ENCODE measurements at regions of chr1 and their contacts with region 1.

Region 1: DNA sequence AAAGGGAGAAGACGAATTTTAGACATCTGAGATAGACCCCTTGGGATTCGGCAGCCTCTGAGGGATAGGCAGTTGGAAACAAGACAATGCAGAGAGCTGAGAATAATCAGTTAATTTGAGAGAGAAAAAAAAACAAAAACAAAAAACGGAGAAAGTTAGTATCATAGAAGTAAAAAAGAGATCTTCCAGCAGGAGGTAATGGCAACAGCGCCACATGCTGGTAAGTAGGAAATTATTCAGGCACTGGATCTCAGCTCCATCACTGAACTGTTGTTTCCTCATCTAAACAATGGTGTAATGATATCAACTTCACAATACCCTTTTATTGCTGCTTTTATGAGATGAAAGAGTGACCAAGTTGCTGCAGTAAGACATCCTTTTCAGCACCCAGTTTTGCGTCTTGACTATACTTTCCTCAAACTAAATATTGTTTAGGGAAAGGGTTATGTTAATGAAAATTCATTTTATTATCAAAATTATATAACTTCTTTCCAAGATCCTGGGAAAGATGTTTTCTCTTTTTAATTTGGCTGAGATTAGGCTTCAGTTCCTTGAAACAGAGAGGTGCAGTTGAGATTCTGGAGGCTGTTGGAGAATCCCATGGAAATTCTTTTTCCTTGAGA is 91.4 kb upstream of the KCNA3 start:
- DNase-seq: no peak
- ATAC-seq: peak; percentile 86
- H3K4me3 ChIP-seq: 0 out of 2 replicates have a peak overlapping the region, but pooled peaks have one; percentile 43
- H3K27ac ChIP-seq: no peak overlapping the region
- H3K4me1 ChIP-seq: peaks cover 11% of the 10 kb centered on the region
- H3K27me3 ChIP-seq: no peaks in the 10 kb centered on the region
- CTCF ChIP-seq: peak; percentile 74 to 94 (median 85)
- EP300 ChIP-seq: no peak
- POLR2A ChIP-seq: no peak
- RAD21 ChIP-seq: peak; percentile 97

Region 2: GRCh38 chr1:110594456-110595352 is 171.4 kb before region 1 on chr1:
- CTCF ChIA-PET with region 1: interaction called, 7 read pairs
- POLR2A ChIA-PET with region 1: no interaction called
- RAD21 ChIA-PET with region 1: interaction called, 4 read pairs
- SMC1A ChIA-PET with region 1: interaction called, 10 read pairs
- in situ Hi-C with region 1: no loop called
- intact Hi-C with region 1: no loop called
- DNase-seq: no peak
- ATAC-seq: peak; percentile 58
- H3K4me3 ChIP-seq: no peak overlapping the region
- H3K27ac ChIP-seq: no peak overlapping the region
- H3K4me1 ChIP-seq: peaks cover 10% of the 10 kb centered on the region
- H3K27me3 ChIP-seq: no peaks in the 10 kb centered on the region; a peak in 1 of 4 replicates
- CTCF ChIP-seq: no peak
- EP300 ChIP-seq: no peak
- POLR2A ChIP-seq: no peak
- RAD21 ChIP-seq: no peak

Region 3: GRCh38 chr1:110630839-110631663 is 135.1 kb before region 1 on chr1:
- CTCF ChIA-PET with region 1: interaction called, 162 read pairs
- POLR2A ChIA-PET with region 1: interaction called, 5 read pairs
- RAD21 ChIA-PET with region 1: interaction called, 66 read pairs
- SMC1A ChIA-PET with region 1: interaction called, 98 read pairs
- in situ Hi-C with region 1: no loop called
- intact Hi-C with region 1: loop called (anchors 1 kb)
- DNase-seq: peak; percentile 84
- ATAC-seq: peak; percentile 85
- H3K4me3 ChIP-seq: peak overlapping the region; percentile 10; the same call in 1 of the 2 replicates
- H3K27ac ChIP-seq: peak overlapping the region; percentile 66
- H3K4me1 ChIP-seq: peaks cover 67% of the 10 kb centered on the region
- H3K27me3 ChIP-seq: no peaks in the 10 kb centered on the region
- CTCF ChIP-seq: peak; percentile 84 to 89 (median 86)
- EP300 ChIP-seq: no peak
- POLR2A ChIP-seq: no peak
- RAD21 ChIP-seq: peak; percentile 94

Region 4: DNA sequence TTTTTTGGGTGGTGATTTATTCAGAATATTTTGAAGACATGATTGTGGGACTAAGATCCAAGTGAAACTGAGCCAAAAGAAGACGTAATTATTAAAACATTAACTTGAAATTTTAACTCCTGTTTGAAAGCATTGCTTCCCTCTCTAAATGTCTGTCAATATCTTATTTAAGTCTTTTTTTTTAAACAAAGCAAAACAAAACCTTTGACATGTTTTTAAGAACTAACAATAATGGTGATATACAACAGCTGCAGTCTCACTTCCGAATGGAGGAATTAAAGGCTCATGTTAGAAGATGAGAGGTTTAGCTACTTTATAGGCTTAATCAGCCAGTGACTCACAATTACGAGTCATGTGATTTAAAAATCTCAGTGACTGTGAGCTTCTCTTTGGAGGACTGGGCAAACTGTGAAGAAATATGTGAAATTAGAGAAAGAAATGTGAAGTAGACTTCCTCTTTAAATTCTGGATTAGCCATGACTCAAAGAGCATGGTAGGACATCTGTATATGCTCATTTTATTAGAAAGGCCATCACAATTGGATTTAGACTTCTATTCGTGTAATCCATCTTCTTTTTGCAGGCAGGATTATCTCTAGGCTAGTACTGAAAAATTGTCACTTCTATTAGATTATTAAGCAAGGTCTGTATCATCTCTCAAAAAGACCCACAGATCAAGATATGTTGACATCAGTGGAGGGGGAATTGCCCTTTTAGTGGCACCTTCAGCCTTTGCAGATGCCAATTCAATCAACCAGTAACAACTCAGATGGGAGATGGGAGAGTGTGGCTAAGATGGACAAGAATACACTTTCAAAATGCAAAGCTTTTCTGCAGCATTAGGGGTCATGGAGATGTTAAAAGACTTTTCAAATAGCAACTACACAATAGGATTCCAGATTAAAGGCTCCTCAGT is 120.1 kb before region 1 on chr1:
- CTCF ChIA-PET with region 1: interaction called, 60 read pairs
- POLR2A ChIA-PET with region 1: no interaction called
- RAD21 ChIA-PET with region 1: interaction called, 16 read pairs
- SMC1A ChIA-PET with region 1: interaction called, 19 read pairs
- in situ Hi-C with region 1: no loop called
- intact Hi-C with region 1: no loop called
- DNase-seq: no peak
- ATAC-seq: no peak
- H3K4me3 ChIP-seq: no peak overlapping the region
- H3K27ac ChIP-seq: no peak overlapping the region
- H3K4me1 ChIP-seq: peaks cover 23% of the 10 kb centered on the region
- H3K27me3 ChIP-seq: no peaks in the 10 kb centered on the region
- CTCF ChIP-seq: no peak
- EP300 ChIP-seq: no peak
- POLR2A ChIP-seq: no peak
- RAD21 ChIP-seq: no peak

Region 5: DNA sequence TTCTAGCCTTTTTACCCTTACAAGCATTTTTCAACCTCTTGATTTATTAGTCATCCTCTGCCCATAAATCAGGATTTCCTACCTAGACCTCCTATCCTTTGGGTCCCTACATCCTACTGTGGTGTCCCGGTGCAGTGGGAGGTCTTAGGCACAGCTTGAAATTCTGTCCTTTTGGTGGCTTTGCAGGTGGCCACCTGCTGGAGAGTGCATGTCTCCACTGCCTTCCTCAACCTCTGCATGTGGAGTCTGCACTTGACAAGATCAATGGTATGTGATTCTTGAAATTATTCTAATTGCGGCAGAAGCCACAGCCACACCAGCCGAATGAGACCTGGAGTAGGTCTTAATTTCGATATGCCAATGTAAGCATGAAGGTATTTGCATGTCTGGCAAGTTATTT is 79.9 kb before region 1 on chr1:
- CTCF ChIA-PET with region 1: interaction called, 19 read pairs
- POLR2A ChIA-PET with region 1: no interaction called
- RAD21 ChIA-PET with region 1: interaction called, 6 read pairs
- SMC1A ChIA-PET with region 1: interaction called, 3 read pairs
- in situ Hi-C with region 1: no loop called
- intact Hi-C with region 1: loop called (anchors 5 kb)
- DNase-seq: no peak
- ATAC-seq: peak; percentile 73
- H3K4me3 ChIP-seq: no peak overlapping the region
- H3K27ac ChIP-seq: no peak overlapping the region
- H3K4me1 ChIP-seq: no peaks in the 10 kb centered on the region
- H3K27me3 ChIP-seq: no peaks in the 10 kb centered on the region
- CTCF ChIP-seq: peak in 2 of 3 experiments; percentile 27 to 33; a peak in 4 of 6 replicates
- EP300 ChIP-seq: no peak
- POLR2A ChIP-seq: no peak
- RAD21 ChIP-seq: peak; percentile 21; the same call in 1 of the 2 replicates

Region 6: DNA sequence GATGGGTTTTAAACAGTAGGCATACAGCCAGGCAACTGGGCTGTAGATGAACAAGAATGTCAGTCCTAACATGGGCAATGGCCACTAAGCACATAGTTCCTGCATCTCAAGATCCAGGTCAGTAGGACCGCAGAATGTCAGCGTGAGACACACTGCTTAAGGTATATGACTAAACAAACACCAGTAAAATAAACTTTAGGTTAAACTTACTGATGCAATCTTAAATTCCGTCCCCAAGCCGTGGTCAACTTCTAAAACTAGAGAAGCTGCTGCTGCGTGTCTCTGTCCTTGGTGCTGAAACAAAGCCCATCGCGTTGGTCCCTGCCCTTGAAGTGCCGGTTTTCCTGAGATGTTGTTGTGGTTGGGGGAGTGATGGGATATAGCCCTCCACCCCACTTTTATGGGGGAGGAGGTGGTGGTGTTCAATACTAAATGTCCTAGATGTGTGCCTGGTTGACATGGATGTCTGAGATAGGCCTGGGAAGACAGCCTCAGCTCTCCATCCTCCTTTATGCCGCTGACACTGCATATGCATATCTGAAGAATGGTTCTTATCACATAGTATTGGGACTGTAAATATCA is 19.5 kb before region 1 on chr1:
- CTCF ChIA-PET with region 1: interaction called, 13 read pairs
- POLR2A ChIA-PET with region 1: no interaction called
- RAD21 ChIA-PET with region 1: interaction called, 11 read pairs
- SMC1A ChIA-PET with region 1: interaction called, 19 read pairs
- in situ Hi-C with region 1: no loop called
- intact Hi-C with region 1: no loop called
- DNase-seq: no peak
- ATAC-seq: peak; percentile 55; the same call in 2 of the 3 replicates
- H3K4me3 ChIP-seq: no peak overlapping the region
- H3K27ac ChIP-seq: no peak overlapping the region
- H3K4me1 ChIP-seq: no peaks in the 10 kb centered on the region; the same call in 1 of the 2 replicates
- H3K27me3 ChIP-seq: no peaks in the 10 kb centered on the region
- CTCF ChIP-seq: no peak
- EP300 ChIP-seq: no peak
- POLR2A ChIP-seq: no peak
- RAD21 ChIP-seq: no peak

Region 7: GRCh38 chr1:110780600-110781484 is 14.7 kb after region 1 on chr1:
- CTCF ChIA-PET with region 1: interaction called, 93 read pairs
- POLR2A ChIA-PET with region 1: interaction called, 3 read pairs
- RAD21 ChIA-PET with region 1: interaction called, 19 read pairs
- SMC1A ChIA-PET with region 1: interaction called, 86 read pairs
- in situ Hi-C with region 1: no loop called
- intact Hi-C with region 1: no loop called
- DNase-seq: no peak
- ATAC-seq: peak; percentile 81
- H3K4me3 ChIP-seq: no peak overlapping the region
- H3K27ac ChIP-seq: no peak overlapping the region
- H3K4me1 ChIP-seq: peaks cover 5% of the 10 kb centered on the region
- H3K27me3 ChIP-seq: no peaks in the 10 kb centered on the region
- CTCF ChIP-seq: peak; percentile 74 to 87 (median 83)
- EP300 ChIP-seq: no peak
- POLR2A ChIP-seq: no peak
- RAD21 ChIP-seq: peak; percentile 90

Measured in GM12878 (cell line).